CD4-positive, alpha-beta T cell (primary cell): ENCODE measurements at regions of chr13 and their contacts with region 1.

Region 1: DNA sequence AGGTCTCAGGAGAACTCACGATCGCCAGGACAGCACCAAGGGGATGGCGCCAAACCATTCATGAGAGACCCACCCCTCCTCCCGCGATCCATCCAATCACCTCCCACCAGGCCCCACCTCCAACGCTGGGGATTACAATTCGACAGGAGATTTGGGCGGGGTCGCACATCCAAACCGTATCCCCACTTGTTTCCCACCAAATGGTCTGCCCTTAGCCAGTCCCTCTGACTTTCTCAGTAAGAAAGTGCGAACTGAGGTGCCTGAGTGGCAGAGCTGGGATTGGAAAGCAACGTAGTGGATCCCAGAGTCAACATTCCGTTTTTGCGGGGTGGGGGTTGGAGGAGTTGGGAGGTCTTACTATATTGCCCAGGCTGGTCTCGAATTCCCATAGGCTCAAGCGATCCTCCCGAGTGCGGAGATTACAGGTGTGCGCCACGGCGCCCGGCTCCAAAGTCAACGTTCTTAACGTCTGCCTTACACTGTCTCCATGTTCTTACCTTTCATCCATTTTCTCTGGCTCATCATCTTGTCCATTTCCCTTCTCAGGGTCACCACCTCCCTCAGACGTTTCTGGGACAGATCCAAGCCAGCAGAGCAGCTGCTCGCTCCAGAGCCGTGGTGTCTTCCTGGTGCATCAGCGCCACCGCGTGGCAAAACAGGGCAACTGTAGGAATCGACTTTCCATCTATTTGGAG is 102.7 kb upstream of the ABCC4 start:
- DNase-seq: peak; percentile 59 to 86 (median 72)
- ATAC-seq: peak; percentile 97
- H3K4me3 ChIP-seq: peak overlapping the region; percentile 62
- H3K4me3 Mint-ChIP-seq: peak overlapping the region; percentile 94
- H3K27ac ChIP-seq: no peak overlapping the region
- H3K27ac Mint-ChIP-seq: no peak overlapping the region
- H3K4me1 ChIP-seq: peaks cover 9% of the 10 kb centered on the region
- H3K4me1 Mint-ChIP-seq: peaks cover 10% of the 10 kb centered on the region
- H3K27me3 ChIP-seq: peaks cover 0 to 5% of the 10 kb centered on the region in 2 experiments
- H3K27me3 Mint-ChIP-seq: peaks cover 4% of the 10 kb centered on the region
- CTCF ChIP-seq: peak; percentile 94

Region 2: GRCh38 chr13:94435604-94436226 is 968.3 kb before region 1 on chr13:
- CTCF ChIA-PET with region 1: no interaction called
- POLR2A ChIA-PET with region 1: no interaction called
- intact Hi-C with region 1: loop called (anchors 5 to 10 kb)
- DNase-seq: peak in 3 of 14 experiments; percentile 60 to 67 (median 64)
- ATAC-seq: peak; percentile 80
- H3K4me3 ChIP-seq: no peak overlapping the region
- H3K4me3 Mint-ChIP-seq: no peak overlapping the region
- H3K27ac ChIP-seq: no peak overlapping the region
- H3K27ac Mint-ChIP-seq: no peak overlapping the region
- H3K4me1 ChIP-seq: no peaks in the 10 kb centered on the region
- H3K4me1 Mint-ChIP-seq: no peaks in the 10 kb centered on the region
- H3K27me3 ChIP-seq: no peaks in the 10 kb centered on the region
- H3K27me3 Mint-ChIP-seq: no peaks in the 10 kb centered on the region
- CTCF ChIP-seq: peak; percentile 81

Region 3: DNA sequence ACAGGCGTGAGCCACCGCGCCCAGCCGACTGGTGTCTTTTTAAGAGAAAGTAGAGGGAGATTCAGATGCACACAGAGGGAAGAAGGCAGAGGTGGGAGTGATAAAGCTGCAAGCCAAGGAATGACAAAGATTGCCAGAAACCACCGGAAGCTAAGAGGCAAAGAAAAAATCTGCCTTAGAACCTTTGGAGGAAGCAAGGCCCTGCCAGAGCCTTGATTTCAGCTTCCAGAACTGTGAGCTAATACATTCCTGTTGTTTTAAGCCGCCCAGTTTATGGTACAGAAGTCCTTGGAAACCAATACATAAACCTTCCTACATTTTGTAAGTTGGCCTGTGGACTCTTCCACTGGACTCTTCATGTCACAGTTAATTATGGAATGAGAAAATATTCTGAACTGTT is 619.9 kb before region 1 on chr13:
- CTCF ChIA-PET with region 1: no interaction called
- POLR2A ChIA-PET with region 1: no interaction called
- intact Hi-C with region 1: no loop called
- DNase-seq: no peak
- ATAC-seq: no peak
- H3K4me3 ChIP-seq: no peak overlapping the region
- H3K4me3 Mint-ChIP-seq: no peak overlapping the region
- H3K27ac ChIP-seq: no peak overlapping the region
- H3K27ac Mint-ChIP-seq: no peak overlapping the region
- H3K4me1 ChIP-seq: no peaks in the 10 kb centered on the region
- H3K4me1 Mint-ChIP-seq: no peaks in the 10 kb centered on the region
- H3K27me3 ChIP-seq: no peaks in the 10 kb centered on the region
- H3K27me3 Mint-ChIP-seq: peaks cover 9% of the 10 kb centered on the region
- CTCF ChIP-seq: no peak

Region 4: GRCh38 chr13:95301183-95301967 is 102.6 kb before region 1 on chr13 and contains the start of gene ABCC4:
- CTCF ChIA-PET with region 1: interaction called, 6 read pairs
- POLR2A ChIA-PET with region 1: no interaction called
- intact Hi-C with region 1: loop called in 1 of 2 experiments (anchors 2 kb)
- DNase-seq: peak; percentile 12 to 76 (median 43)
- ATAC-seq: peak; percentile 79
- H3K4me3 ChIP-seq: peak within 1 kb of the TSS; percentile 79
- H3K4me3 Mint-ChIP-seq: peak within 1 kb of the TSS; percentile 90
- H3K27ac ChIP-seq: no peak within 1 kb of the TSS
- H3K27ac Mint-ChIP-seq: peak within 1 kb of the TSS; percentile 21
- H3K4me1 ChIP-seq: peaks cover 21% of the 10 kb centered on the region
- H3K4me1 Mint-ChIP-seq: peaks cover 25% of the 10 kb centered on the region
- H3K27me3 ChIP-seq: no peaks in the 10 kb centered on the region
- H3K27me3 Mint-ChIP-seq: no peaks in the 10 kb centered on the region
- CTCF ChIP-seq: no peak
- total RNA-seq, gene ABCC4: 4.0 to 4.4 TPM

Region 5: DNA sequence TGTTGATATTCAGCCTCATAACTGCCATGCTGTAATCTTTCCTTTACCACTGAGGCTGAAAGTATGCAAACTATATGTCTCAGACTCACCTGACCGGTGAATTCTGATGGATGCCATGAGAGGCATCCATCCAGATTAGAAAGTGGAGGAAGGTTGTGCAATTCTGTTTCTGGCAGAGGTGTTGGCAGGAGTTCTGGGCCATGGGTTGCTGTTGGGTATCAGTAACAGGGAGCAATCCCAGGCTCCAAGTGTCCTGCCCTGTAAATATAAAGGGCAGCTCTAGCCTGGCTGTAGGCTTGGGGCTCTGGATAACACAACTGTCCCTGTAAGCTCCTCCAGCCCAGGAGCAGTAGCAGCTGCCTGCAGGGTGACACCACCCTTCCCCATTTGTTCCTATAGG is 25.4 kb before region 1 on chr13:
- CTCF ChIA-PET with region 1: interaction called, 11 read pairs
- POLR2A ChIA-PET with region 1: no interaction called
- intact Hi-C with region 1: no loop called
- DNase-seq: no peak
- ATAC-seq: no peak
- H3K4me3 ChIP-seq: no peak overlapping the region
- H3K4me3 Mint-ChIP-seq: no peak overlapping the region
- H3K27ac ChIP-seq: no peak overlapping the region
- H3K27ac Mint-ChIP-seq: no peak overlapping the region
- H3K4me1 ChIP-seq: peaks cover 6% of the 10 kb centered on the region
- H3K4me1 Mint-ChIP-seq: peaks cover 6% of the 10 kb centered on the region
- H3K27me3 ChIP-seq: no peaks in the 10 kb centered on the region
- H3K27me3 Mint-ChIP-seq: peaks cover 6% of the 10 kb centered on the region
- CTCF ChIP-seq: no peak